Vagina (tissue), 2 donors: ENCODE measurements at regions of chr17 and their contacts with region 1.

Region 1: DNA sequence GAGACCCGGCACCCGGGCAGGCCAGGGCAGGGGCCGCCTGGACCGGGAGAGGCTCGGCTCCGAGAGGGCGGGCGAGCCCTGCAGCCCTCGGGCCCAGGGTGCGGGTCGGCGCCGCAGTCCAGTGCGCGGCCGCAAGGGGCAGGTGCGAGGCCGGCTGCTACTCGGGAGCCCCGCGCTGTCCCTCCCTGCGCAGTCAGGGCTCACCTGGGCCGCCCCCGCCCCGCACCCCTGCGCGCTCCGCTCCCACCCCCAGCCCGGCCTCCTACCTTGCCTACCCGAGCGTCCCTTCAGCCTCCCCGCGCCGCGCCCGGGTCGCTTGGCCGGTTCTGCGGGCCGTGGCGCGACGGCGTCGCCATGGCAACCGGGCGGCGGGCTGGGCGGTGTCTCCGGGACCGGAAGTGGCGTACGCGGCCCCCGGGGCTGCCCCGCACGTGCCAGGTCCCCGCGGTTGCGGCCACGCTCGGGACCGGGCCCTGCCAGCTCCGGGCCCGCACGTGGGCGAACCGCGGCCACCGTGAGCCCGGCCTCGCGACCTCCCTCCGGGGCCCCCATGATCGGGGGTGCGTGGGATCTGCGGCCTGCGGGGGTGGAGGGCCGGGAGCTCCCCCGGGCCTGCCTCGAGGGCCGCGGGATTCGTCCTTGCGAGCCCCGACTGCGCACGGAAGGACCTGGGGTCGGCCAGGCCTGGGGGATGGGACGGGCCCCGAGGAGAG is at the start of gene CYB561:
- DNase-seq: no peak
- H3K4me3 ChIP-seq: peak within 1 kb of the TSS; percentile 73 to 84
- H3K27ac ChIP-seq: peak within 1 kb of the TSS; percentile 93
- H3K4me1 ChIP-seq: peaks cover 32% of the 10 kb centered on the region
- H3K27me3 ChIP-seq: no peaks in the 10 kb centered on the region
- CTCF ChIP-seq: peak in 2 of 3 experiments; percentile 16 to 39
- POLR2A ChIP-seq: peak in 1 of 2 donors; percentile 61
- total RNA-seq, gene CYB561: 46.2 TPM

Region 2: DNA sequence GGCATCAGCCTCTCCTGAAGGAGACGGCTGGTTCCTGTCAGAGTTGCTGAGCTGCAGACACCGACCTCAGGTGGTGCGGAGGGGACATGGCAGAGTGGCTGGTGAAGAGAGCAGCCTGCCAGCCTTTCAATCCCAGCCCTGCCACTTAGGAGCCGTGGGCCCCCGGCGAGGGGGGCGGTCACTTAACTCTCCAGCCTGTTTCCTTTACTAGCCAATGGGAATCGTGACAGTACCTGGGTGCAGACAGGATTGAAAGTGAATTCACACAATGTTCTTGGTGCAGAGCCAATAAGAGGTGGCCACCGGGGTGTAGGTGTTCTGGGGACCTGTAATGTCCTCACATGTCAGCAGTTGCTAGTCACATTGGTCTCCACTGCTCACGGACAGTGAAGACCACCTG is 44.2 kb after region 1 on chr17:
- intact Hi-C with region 1: no loop called
- DNase-seq: no peak
- H3K4me3 ChIP-seq: no peak overlapping the region
- H3K27ac ChIP-seq: no peak overlapping the region
- H3K4me1 ChIP-seq: no peaks in the 10 kb centered on the region
- H3K27me3 ChIP-seq: no peaks in the 10 kb centered on the region
- CTCF ChIP-seq: no peak
- POLR2A ChIP-seq: no peak

Region 3: DNA sequence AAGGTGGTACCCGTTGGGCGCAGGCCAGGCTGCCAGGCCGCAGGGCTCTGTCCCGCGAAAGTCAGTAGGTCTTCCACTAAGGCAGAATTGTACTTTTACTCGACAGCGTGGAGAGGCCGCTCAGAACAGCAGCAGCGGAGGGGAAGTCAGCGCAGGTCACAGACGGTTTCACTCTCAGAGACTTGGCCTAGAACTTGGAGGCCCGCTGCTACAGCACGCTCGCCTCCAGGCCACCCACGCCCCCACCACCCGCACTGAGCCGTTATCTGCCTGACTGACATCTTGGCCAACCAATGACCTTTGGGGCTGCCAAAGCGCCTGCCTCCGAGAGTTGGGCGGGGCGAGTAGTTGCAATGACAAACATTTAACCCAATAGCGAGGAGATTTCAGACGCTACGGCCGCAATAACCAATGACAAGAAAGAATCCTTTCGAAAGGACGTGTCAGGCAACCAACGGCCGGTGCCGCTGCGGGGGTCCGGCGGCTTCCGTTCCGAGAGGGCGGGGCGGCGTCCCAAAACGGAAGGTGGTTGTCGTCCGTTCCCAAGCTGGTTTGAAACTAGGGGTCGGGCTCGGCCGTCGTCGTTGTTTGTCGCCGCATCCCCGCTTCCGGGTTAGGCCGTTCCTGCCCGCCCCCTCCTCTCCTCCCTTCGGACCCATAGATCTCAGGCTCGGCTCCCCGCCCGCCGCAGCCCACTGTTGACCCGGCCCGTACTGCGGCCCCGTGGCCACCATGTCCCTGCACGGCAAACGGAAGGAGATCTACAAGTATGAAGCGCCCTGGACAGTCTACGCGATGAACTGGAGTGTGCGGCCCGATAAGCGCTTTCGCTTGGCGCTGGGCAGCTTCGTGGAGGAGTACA is 104.0 kb after region 1 on chr17 and contains the start of gene DCAF7:
- intact Hi-C with region 1: loop called (anchors 10 kb)
- DNase-seq: peak; percentile 99
- H3K4me3 ChIP-seq: peak within 1 kb of the TSS; percentile 73 to 100
- H3K27ac ChIP-seq: peak within 1 kb of the TSS; percentile 90
- H3K4me1 ChIP-seq: peaks cover 51% of the 10 kb centered on the region
- H3K27me3 ChIP-seq: no peaks in the 10 kb centered on the region
- CTCF ChIP-seq: no peak
- POLR2A ChIP-seq: peak in 1 of 2 donors; percentile 37
- total RNA-seq, gene DCAF7: 34.1 TPM